ENCODE measurements at regions of chr3 and their contacts with region 1.

Region 1: GRCh38 chr3:15205934-15206661 is at the start of gene CAPN7:
- DNase-seq: peak; percentile 92 to 95 (median 94)
- H3K4me3 ChIP-seq: peak within 1 kb of the TSS; percentile 70 to 83
- H3K4me3 Mint-ChIP-seq: peak within 1 kb of the TSS; percentile 91 to 96 (median 92)
- H3K27ac ChIP-seq: peak within 1 kb of the TSS; percentile 88
- H3K27ac Mint-ChIP-seq: peak within 1 kb of the TSS; percentile 77 to 97 (median 95)
- H3K4me1 ChIP-seq: peaks cover 46% of the 10 kb centered on the region
- H3K4me1 Mint-ChIP-seq: peaks cover 18 to 43% (median 29%) of the 10 kb centered on the region in 4 donors
- H3K27me3 ChIP-seq: no peaks in the 10 kb centered on the region
- H3K27me3 Mint-ChIP-seq: no peaks in the 10 kb centered on the region
- total RNA-seq, gene CAPN7: 95.5 to 103 TPM

Region 2: DNA sequence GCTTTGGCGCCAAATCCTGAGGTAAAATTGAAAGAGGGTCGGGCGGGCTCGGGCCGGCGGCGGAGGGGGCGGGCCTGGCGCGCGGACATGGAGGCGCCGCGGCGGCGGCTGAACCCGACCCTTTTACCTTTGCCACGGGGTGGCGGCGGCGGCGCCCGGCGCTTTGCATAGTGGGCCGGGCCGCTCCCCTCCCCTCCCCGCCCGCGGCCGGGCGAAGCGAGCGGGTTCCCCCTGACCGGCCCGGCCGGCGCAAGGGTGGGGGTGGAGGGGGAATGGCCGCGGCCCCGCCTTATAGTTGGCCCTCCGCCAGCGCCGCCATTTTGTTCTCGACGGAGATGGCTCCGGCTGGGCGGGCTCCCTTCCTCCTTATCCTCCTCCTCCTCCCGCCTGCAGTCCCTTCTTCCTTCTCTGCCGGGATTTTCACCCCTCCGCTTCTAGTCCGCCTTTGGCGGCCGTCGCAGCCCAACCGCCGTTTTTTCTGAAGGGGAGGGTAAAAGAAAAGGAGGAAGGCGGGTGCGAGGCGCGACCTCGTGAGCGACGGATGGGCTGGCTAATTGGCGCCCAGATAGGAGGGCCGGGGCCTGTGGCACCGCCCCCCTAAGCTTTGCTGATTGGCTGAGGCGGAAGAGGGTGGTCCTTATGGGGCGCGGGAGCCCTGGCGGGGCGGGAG is 258.1 kb before region 1 on chr3:
- CTCF ChIA-PET with region 1: no interaction called
- POLR2A ChIA-PET with region 1: interaction called, 3 read pairs
- intact Hi-C with region 1: loop called (anchors 1 kb)
- DNase-seq: peak; percentile 95 to 99 (median 96)
- H3K4me3 ChIP-seq: peak overlapping the region; percentile 63 to 83
- H3K4me3 Mint-ChIP-seq: peak overlapping the region; percentile 98 to 100 (median 100)
- H3K27ac ChIP-seq: peak overlapping the region; percentile 97
- H3K27ac Mint-ChIP-seq: peak overlapping the region; percentile 99 to 100 (median 100)
- H3K4me1 ChIP-seq: peaks cover 44% of the 10 kb centered on the region
- H3K4me1 Mint-ChIP-seq: peaks cover 27 to 71% (median 48%) of the 10 kb centered on the region in 4 donors
- H3K27me3 ChIP-seq: no peaks in the 10 kb centered on the region
- H3K27me3 Mint-ChIP-seq: no peaks in the 10 kb centered on the region

Region 3: DNA sequence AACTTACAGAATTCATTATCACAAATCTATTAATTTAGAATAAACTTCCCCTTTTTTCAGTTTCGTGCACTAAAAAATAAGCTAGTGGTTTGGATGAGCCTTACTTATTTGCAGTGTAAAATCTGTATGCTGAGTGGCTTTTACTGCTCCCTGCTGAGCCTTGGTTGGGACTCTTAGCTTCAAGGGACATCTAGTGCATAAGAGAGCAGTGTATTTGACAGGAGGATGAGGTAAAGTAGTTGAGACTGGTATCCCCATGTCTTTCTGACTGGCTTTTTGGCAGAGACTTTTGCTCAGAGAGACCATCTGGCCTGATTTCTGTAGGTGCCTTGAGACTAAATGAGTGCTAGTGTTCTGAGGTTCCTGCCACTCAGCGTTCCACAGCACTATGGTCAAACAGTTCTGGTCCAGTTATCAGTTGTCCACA is 11.8 kb after region 1 on chr3:
- CTCF ChIA-PET with region 1: interaction called, 7 read pairs
- POLR2A ChIA-PET with region 1: interaction called, 14 read pairs
- intact Hi-C with region 1: loop called (anchors 2 kb)
- DNase-seq: no peak
- H3K4me3 ChIP-seq: no peak overlapping the region
- H3K4me3 Mint-ChIP-seq: no peak overlapping the region
- H3K27ac ChIP-seq: no peak overlapping the region
- H3K27ac Mint-ChIP-seq: peak overlapping the region in 1 of 7 donors; percentile 6
- H3K4me1 ChIP-seq: no peaks in the 10 kb centered on the region
- H3K4me1 Mint-ChIP-seq: peaks cover 11 to 40% (median 26%) of the 10 kb centered on the region in 4 donors
- H3K27me3 ChIP-seq: no peaks in the 10 kb centered on the region
- H3K27me3 Mint-ChIP-seq: no peaks in the 10 kb centered on the region

Region 4: DNA sequence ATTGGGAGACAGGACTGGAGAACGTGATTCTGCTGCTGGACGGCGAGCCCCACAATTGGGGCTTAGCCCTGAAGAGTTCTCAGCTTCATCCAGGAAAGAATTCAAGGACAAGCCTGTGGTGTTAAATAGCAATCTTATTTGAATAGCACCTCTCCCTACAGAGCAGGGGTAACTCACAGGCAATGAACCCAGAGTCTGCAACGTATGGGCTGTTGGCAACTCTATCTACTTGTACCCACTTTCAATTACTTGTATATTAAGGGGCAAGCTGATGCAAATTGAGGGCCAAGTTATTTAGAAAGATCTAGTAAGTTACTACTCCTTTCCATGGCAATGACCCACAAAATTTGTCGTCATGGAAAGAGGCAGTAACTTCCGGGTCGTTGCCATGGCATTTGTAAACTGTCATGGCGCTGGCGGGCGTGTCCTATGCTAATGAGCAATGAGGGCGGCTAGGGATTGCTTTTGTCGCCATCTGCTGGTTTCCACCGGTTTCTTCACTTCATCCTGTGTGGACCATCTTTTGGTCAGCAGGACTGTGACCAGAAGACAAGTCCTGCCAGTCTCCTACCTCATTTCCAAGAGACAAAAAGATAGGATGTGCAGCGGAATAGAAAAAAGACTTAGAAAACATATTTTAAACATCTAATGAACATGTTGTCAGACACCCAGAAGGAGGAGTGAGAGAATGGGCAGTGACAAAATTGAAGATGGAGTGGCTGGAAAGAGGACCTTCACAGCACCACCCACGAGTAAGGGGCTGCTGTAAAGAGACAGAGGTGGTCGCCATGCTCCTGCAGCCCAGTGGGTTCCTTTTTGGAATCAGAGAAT is 172.1 kb after region 1 on chr3:
- CTCF ChIA-PET with region 1: interaction called, 16 read pairs
- POLR2A ChIA-PET with region 1: interaction called, 3 read pairs
- intact Hi-C with region 1: loop called (anchors 1 kb)
- DNase-seq: peak; percentile 94 to 97 (median 95)
- H3K4me3 ChIP-seq: no peak overlapping the region
- H3K4me3 Mint-ChIP-seq: peak overlapping the region in 5 of 8 donors; percentile 11 to 82 (median 22)
- H3K27ac ChIP-seq: peak overlapping the region; percentile 91
- H3K27ac Mint-ChIP-seq: peak overlapping the region; percentile 95 to 98 (median 97)
- H3K4me1 ChIP-seq: peaks cover 5% of the 10 kb centered on the region
- H3K4me1 Mint-ChIP-seq: peaks cover 9 to 10% (median 9%) of the 10 kb centered on the region in 4 donors
- H3K27me3 ChIP-seq: no peaks in the 10 kb centered on the region
- H3K27me3 Mint-ChIP-seq: peaks cover 0 to 1% of the 10 kb centered on the region in 2 donors

Region 5: DNA sequence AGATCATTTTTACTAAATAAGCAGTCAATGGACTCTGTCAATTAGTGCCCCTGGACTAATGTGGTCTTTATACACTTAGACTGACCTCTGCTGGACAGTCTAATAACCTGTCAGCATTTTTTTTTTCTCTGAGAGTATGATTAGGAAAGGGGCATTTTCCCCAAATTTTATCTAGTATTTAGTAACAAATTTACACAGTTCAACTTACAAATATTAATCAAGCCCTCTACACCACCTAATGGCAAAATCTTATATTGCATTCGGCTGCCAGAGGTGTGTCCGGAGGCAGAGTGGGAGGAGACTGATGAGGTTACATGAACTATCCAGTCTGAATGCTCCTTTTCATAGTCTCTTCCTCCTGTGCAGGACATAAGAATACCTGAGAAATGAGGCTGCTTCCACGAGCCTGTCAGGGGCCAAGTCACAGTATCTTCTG is 351.4 kb after region 1 on chr3:
- CTCF ChIA-PET with region 1: interaction called, 43 read pairs
- POLR2A ChIA-PET with region 1: interaction called, 6 read pairs
- intact Hi-C with region 1: no loop called
- DNase-seq: peak; percentile 67 to 82 (median 79)
- H3K4me3 ChIP-seq: no peak overlapping the region
- H3K4me3 Mint-ChIP-seq: peak overlapping the region in 2 of 8 donors; percentile 9 to 59
- H3K27ac ChIP-seq: no peak overlapping the region
- H3K27ac Mint-ChIP-seq: peak overlapping the region; percentile 5 to 75 (median 62)
- H3K4me1 ChIP-seq: peaks cover 19% of the 10 kb centered on the region
- H3K4me1 Mint-ChIP-seq: peaks cover 17 to 23% (median 20%) of the 10 kb centered on the region in 4 donors
- H3K27me3 ChIP-seq: no peaks in the 10 kb centered on the region
- H3K27me3 Mint-ChIP-seq: no peaks in the 10 kb centered on the region

Region 6: DNA sequence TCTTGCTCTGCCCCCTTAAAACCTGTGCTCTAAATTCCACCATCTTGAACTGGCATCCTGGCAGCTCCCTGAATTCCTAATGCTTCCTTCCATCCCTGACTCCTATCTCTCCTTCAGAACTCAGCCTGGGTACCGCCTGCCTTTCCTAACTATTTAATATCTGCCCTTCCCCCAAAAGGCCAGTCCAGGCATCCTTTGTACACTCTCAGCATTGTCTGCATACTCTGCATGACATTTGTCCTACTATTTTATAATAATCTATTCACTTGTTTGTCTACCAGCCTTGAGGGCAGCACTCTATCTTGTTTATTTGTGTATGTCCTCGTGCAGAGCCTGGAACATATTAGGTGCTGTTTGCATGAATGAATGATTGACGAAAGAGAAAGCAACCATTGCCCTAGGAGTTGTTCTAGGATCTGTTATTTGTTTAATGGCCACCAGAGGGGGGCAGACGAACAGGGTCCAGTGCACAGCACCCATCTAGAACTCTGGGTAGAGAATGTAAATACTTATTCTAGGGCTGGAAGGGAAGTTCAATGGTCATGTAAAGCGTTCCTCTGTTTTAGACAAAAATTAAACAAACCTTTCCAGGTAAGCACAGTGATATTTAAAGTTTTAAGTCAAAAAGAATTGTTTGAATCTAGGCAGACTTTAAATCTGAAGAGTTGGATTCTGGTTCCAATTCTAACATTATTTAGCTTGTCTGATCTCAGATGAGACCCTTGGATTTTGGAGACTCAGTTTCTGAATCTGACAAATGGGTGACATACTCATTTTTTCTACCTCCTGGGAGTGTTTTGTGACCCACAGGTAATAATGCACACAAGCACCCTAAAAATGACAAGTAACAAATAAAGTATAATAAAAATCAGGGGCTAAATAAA is 842.6 kb after region 1 on chr3:
- CTCF ChIA-PET with region 1: no interaction called
- POLR2A ChIA-PET with region 1: no interaction called
- intact Hi-C with region 1: loop called (anchors 2 kb)
- DNase-seq: peak in 4 of 5 donors; percentile 34 to 48 (median 41)
- H3K4me3 ChIP-seq: no peak overlapping the region
- H3K4me3 Mint-ChIP-seq: peak overlapping the region in 4 of 8 donors; percentile 41 to 75 (median 66)
- H3K27ac ChIP-seq: no peak overlapping the region
- H3K27ac Mint-ChIP-seq: no peak overlapping the region
- H3K4me1 ChIP-seq: no peaks in the 10 kb centered on the region
- H3K4me1 Mint-ChIP-seq: peaks cover 0 to 5% (median 2%) of the 10 kb centered on the region in 4 donors
- H3K27me3 ChIP-seq: no peaks in the 10 kb centered on the region
- H3K27me3 Mint-ChIP-seq: peaks cover 3% of the 10 kb centered on the region in 2 donors

Measured in CD4-positive, alpha-beta memory T cell (primary cell).